ENCODE measurements at regions of chr13 and their contacts with region 1.

Region 1: DNA sequence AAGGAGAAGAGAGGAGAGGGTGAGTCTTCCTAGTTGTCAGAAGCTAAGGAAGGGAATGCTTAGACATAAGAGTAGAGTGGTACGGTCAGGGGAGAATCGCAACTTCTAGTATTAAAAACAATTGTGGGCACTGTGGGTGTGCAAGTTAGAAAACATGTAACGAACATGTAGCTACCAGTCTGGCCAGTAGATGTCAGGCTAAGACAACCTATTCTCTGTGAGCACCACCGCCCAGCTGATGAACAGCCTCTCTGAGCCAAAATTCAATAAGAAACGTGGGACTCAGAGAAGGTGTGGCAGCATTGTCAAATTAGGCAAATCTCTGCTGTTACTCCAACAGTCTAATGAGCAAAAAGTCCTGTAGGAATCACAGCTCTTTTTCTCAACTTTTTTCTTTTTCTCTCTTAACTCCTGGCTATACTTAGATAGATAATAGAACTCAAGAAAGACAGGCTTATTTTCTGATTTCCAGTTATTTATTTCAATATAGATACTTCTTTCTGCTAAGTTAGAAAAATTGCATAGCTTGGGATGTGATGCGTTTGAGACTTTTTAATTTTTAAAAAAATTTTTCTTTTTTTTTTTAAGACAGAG is 186.2 kb downstream of the USP12 start:
- DNase-seq: peak; percentile 44 to 87 (median 60)
- ATAC-seq: peak; percentile 91
- H3K4me3 ChIP-seq: no peak overlapping the region
- H3K4me3 Mint-ChIP-seq: no peak overlapping the region
- H3K27ac ChIP-seq: no peak overlapping the region
- H3K27ac Mint-ChIP-seq: no peak overlapping the region
- H3K4me1 ChIP-seq: no peaks in the 10 kb centered on the region
- H3K4me1 Mint-ChIP-seq: no peaks in the 10 kb centered on the region
- H3K27me3 ChIP-seq: peaks cover 0 to 5% of the 10 kb centered on the region in 2 experiments
- H3K27me3 Mint-ChIP-seq: peaks cover 30% of the 10 kb centered on the region
- CTCF ChIP-seq: peak; percentile 92

Region 2: DNA sequence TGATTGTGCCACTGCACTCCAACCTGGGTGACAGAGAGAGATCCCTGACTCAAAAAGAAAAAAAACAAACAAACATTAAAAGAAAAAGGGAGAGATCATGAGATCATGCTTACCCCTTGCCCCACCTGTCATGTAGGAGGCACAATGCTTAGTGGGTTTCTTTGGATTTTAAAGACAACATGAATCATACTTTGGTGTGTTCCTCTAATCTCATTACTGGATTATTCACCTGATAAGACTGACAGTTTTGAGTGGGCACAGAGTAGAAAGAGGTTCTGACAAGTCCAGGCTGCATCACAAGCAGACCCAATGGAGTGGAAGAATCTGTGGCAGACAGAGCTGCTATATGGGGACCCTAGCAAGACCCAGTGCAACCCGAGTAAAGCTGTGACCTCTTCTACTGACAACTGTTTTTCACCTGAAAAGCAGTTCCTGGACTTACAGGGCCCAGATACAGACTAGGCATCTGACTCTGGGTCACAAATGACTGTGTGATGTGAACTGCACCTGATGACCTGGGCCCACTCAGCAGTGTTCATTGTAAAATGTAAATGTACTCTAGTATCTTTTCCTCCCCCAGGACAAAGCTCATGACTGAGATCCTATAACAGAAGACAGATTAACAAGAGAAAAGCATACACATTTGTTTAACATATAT is 215.2 kb after region 1 on chr13:
- CTCF ChIA-PET with region 1: interaction called, 3 read pairs
- POLR2A ChIA-PET with region 1: no interaction called
- intact Hi-C with region 1: loop called in 1 of 2 experiments (anchors 2 kb)
- DNase-seq: no peak
- ATAC-seq: no peak
- H3K4me3 ChIP-seq: no peak overlapping the region
- H3K4me3 Mint-ChIP-seq: no peak overlapping the region
- H3K27ac ChIP-seq: no peak overlapping the region
- H3K27ac Mint-ChIP-seq: no peak overlapping the region
- H3K4me1 ChIP-seq: no peaks in the 10 kb centered on the region
- H3K4me1 Mint-ChIP-seq: no peaks in the 10 kb centered on the region
- H3K27me3 ChIP-seq: peaks cover 1 to 6% of the 10 kb centered on the region in 2 experiments
- H3K27me3 Mint-ChIP-seq: peaks cover 14% of the 10 kb centered on the region
- CTCF ChIP-seq: no peak

Region 3: GRCh38 chr13:27270594-27271520 is 285.5 kb after region 1 on chr13 and contains the start of gene RASL11A:
- CTCF ChIA-PET with region 1: interaction called, 7 read pairs
- POLR2A ChIA-PET with region 1: no interaction called
- intact Hi-C with region 1: loop called (anchors 5 kb)
- DNase-seq: peak; percentile 52 to 85 (median 68)
- ATAC-seq: peak; percentile 91
- H3K4me3 ChIP-seq: peak within 1 kb of the TSS; percentile 73
- H3K4me3 Mint-ChIP-seq: peak within 1 kb of the TSS; percentile 92
- H3K27ac ChIP-seq: no peak within 1 kb of the TSS
- H3K27ac Mint-ChIP-seq: peak within 1 kb of the TSS; percentile 68
- H3K4me1 ChIP-seq: peaks cover 17% of the 10 kb centered on the region
- H3K4me1 Mint-ChIP-seq: peaks cover 34% of the 10 kb centered on the region
- H3K27me3 ChIP-seq: peaks cover 5 to 8% of the 10 kb centered on the region in 2 experiments
- H3K27me3 Mint-ChIP-seq: peaks cover 14% of the 10 kb centered on the region
- CTCF ChIP-seq: peak; percentile 99
- total RNA-seq, gene RASL11A: 2.9 to 4.7 TPM

Region 4: DNA sequence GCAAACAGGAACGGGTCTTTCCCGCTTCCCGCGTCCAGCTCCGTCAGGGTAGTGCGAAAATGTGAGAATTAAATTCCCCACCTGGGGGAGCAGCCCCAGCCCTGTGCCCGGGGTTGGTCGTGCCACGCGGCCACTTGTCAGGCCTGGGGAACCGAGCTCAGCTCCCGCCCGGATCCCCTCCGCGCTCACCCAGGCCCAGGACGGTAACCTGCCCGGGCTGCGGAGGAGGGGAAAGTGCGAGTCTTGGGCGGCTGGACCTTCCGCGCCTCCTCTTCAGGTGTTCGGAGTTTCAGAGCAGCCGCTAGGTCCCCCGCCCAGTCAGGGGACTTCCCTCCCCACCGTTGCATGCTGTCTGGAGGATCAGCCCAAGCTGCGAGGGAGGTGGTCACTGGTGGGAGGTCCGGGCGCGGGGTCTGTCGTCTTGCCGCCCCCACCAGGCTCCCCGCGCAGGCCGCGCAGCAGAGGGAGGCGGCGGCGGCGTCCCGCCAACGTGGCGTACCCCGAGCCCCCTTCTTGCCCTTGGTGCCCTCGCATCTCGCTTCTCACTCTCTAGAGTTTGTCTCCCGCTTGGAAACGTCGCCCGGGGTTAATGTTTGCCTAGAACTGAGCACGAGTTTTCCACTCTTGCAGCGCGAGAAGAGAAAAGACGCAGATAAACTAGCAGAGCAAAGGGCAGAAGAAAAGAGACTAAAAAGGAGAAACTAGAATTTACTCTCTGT is 995.1 kb after region 1 on chr13:
- CTCF ChIA-PET with region 1: interaction called, 10 read pairs
- POLR2A ChIA-PET with region 1: no interaction called
- intact Hi-C with region 1: loop called (anchors 1 kb)
- DNase-seq: no peak
- ATAC-seq: no peak
- H3K4me3 ChIP-seq: no peak overlapping the region
- H3K4me3 Mint-ChIP-seq: no peak overlapping the region
- H3K27ac ChIP-seq: no peak overlapping the region
- H3K27ac Mint-ChIP-seq: no peak overlapping the region
- H3K4me1 ChIP-seq: peaks cover 8% of the 10 kb centered on the region
- H3K4me1 Mint-ChIP-seq: peaks cover 13% of the 10 kb centered on the region
- H3K27me3 ChIP-seq: peaks cover 50 to 67% of the 10 kb centered on the region in 2 experiments
- H3K27me3 Mint-ChIP-seq: peaks cover 80% of the 10 kb centered on the region
- CTCF ChIP-seq: no peak

Measured in CD4-positive, alpha-beta T cell (primary cell).